Panc1 (cell line): ENCODE measurements at regions of chr1 and their contacts with region 1.

Region 1: GRCh38 chr1:111275079-111275478 is 15.6 kb upstream of the CHIA start:
- DNase-seq: peak; percentile 24
- ATAC-seq: no peak
- H3K4me3 ChIP-seq: no peak overlapping the region
- H3K27ac ChIP-seq: no peak overlapping the region
- H3K4me1 ChIP-seq: no peaks in the 10 kb centered on the region
- H3K27me3 ChIP-seq: no peaks in the 10 kb centered on the region
- CTCF ChIP-seq: no peak

Region 2: DNA sequence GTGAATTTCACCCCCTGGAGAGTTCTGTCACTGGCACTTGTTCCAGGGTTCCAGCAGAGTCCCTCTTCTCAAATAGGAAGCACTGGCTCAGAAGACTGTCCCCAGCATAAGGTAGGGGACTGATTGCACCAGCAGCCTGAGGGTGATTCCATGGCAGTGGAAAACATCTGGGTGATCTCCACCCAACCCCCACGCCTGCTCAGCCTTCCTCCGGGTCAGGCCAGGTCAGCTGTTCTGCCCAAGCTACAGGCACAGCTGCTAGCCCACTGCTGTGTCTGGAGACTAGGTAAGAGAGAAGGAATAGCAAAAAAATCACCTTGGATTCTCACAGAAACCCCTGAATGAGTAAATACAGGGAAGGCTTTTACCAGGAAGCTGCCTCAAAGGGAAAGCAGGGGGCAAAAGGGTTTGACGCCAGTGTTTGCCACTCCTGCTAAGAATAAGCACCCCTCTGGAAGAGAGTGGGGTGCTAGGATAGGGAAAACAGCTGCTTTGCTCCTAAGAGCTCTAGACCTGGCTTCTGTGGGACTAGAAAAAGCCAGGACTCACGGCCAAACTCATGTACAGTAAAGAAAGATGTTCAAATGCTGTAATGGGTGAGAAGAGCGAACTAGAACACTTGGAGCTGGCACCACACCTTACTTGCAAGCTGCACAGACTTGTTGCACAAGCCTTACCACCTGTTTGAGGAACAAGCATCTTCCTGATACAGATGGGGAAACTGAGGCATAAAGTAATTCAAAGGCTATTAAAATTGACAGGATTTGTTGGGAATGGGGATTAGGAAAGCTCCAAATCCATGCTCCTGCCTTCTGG is 73.6 kb before region 1 on chr1:
- CTCF ChIA-PET with region 1: no interaction called
- POLR2A ChIA-PET with region 1: interaction called, 14 read pairs
- in situ Hi-C with region 1: no loop called
- intact Hi-C with region 1: no loop called
- DNase-seq: no peak
- ATAC-seq: no peak
- H3K4me3 ChIP-seq: no peak overlapping the region
- H3K27ac ChIP-seq: no peak overlapping the region
- H3K4me1 ChIP-seq: no peaks in the 10 kb centered on the region
- H3K27me3 ChIP-seq: peaks cover 2% of the 10 kb centered on the region; the same call in 1 of the 2 replicates
- CTCF ChIP-seq: no peak